ENCODE measurements at regions of chr9 and their contacts with region 1.

Region 1: DNA sequence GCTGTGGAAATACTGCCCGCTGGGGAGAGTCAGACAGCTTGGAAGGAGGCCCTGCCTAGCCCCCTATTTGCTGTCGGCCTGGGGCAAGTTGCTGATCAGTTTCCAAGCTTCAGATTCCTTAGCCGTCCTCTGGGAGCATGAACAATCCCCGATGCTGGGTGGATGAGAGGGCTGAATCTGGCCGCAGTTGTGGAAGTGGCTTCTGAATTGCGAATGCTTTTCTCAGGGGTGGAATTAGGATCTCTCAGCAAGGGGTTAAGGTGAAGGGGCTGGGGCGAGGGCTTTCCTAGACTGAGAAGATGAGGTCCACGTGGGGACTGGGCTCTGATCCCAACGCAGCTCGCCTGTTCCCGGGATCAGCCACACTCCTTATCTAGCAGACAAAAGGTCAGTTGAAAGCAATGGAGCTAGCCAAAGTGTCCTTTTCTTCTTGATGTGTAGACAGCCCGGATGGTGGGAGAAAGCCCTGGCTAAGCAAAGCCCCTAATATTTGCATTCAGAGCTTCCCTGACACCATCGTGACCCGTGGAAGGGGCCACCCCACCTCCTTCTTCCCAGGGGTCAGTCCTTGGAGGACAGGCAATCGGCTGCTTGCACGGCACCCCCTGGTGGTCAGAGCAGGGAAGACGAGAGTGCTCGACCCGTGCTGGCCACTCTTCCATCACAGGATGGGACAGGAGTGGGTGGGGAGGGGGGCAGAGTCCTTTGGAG is 54.9 kb downstream of the COL15A1 start:
- DNase-seq: peak; percentile 50
- H3K4me3 ChIP-seq: no peak overlapping the region
- H3K27ac ChIP-seq: no peak overlapping the region
- H3K4me1 ChIP-seq: no peaks in the 10 kb centered on the region
- H3K27me3 ChIP-seq: peaks cover 0 to 10% of the 10 kb centered on the region in 2 experiments
- CTCF ChIP-seq: peak; percentile 77 to 90
- POLR2A ChIP-seq: no peak

Region 2: DNA sequence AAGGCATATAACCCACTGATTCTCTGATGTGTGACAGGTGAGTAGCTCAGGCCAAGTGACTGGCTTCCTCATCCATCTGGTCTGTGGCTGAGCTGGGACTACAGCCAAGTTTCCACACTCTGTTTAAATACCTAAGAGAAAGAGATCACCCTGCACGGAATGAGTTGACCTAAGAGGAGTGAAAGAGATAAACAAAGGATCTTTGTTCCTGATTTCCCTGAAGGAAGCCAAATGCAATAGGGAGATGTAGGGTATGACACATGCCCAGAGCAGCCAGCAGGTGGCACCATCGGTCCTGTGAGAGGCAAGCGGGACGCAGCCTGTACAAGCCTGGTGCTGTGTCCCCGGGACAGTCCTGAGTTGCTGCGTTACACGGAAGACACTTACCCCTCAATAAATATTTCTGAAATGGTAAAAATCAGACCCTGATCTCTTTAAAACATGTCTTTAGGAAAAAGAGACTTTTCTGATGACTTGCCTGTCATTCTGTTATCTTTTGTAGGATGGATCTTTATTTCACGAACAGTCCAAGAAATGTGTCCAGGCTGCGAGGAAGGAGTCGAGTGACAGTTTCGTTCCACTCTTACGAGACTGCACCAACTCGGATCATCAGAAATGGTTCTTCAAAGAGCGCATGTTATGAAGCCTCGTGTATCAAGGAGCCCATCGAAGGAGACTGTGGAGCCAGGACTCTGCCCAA is 150.0 kb before region 1 on chr9:
- CTCF ChIA-PET with region 1: interaction called, 181 read pairs
- POLR2A ChIA-PET with region 1: no interaction called
- dilution Hi-C with region 1: no loop called
- intact Hi-C with region 1: loop called (anchors 1 kb)
- DNase-seq: peak; percentile 80
- H3K4me3 ChIP-seq: no peak overlapping the region
- H3K27ac ChIP-seq: no peak overlapping the region
- H3K4me1 ChIP-seq: no peaks in the 10 kb centered on the region
- H3K27me3 ChIP-seq: no peaks in the 10 kb centered on the region
- CTCF ChIP-seq: peak; percentile 93 to 94
- POLR2A ChIP-seq: no peak

Region 3: GRCh38 chr9:98974994-98975712 is 23.4 kb before region 1 on chr9:
- CTCF ChIA-PET with region 1: interaction called, 5 read pairs
- POLR2A ChIA-PET with region 1: no interaction called
- dilution Hi-C with region 1: no loop called
- intact Hi-C with region 1: loop called (anchors 1 kb)
- DNase-seq: peak; percentile 58
- H3K4me3 ChIP-seq: no peak overlapping the region
- H3K27ac ChIP-seq: no peak overlapping the region
- H3K4me1 ChIP-seq: no peaks in the 10 kb centered on the region
- H3K27me3 ChIP-seq: peaks cover 0 to 3% of the 10 kb centered on the region in 2 experiments
- CTCF ChIP-seq: peak; percentile 95 to 100
- POLR2A ChIP-seq: no peak

Region 4: GRCh38 chr9:99140685-99141314 is 142.2 kb after region 1 on chr9:
- CTCF ChIA-PET with region 1: interaction called, 33 read pairs
- POLR2A ChIA-PET with region 1: no interaction called
- dilution Hi-C with region 1: no loop called
- intact Hi-C with region 1: loop called (anchors 1 kb)
- DNase-seq: peak; percentile 30
- H3K4me3 ChIP-seq: no peak overlapping the region
- H3K27ac ChIP-seq: no peak overlapping the region
- H3K4me1 ChIP-seq: no peaks in the 10 kb centered on the region
- H3K27me3 ChIP-seq: no peaks in the 10 kb centered on the region
- CTCF ChIP-seq: peak; percentile 63 to 73
- POLR2A ChIP-seq: no peak

Region 5: DNA sequence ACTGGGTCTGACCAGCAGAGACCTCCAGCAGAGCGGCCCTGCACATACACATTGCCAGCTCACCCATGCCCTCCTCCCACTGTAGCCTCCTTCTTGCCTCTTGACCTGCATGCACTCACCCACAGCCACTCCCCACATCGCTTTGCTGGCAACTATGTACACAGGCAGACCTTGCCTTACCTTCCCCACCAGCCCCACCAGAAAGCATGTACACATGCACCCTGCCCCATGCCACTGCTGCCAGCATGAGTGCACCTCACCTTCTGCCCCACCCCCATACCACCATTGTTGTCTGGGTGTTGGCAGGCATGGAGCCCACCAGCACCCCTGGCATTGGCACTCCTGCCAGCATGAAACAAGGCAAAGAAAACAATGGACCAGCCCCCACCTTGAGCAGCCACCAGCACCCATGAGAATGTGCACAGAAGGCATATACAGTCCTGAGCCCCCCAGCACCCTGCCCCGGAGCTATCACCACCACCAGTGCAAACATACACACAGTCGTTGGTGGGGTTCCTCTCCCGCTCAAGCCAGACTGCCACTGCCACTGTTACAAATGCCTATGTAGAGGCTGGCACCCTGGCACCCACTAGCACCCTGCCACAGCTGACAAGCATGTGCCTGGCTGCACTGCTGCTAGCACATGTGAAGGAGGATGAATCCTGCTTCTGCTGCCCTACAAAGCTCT is 651.7 kb after region 1 on chr9:
- CTCF ChIA-PET with region 1: no interaction called
- POLR2A ChIA-PET with region 1: no interaction called
- dilution Hi-C with region 1: no loop called
- intact Hi-C with region 1: no loop called
- DNase-seq: no peak
- H3K4me3 ChIP-seq: no peak overlapping the region
- H3K27ac ChIP-seq: no peak overlapping the region
- H3K4me1 ChIP-seq: no peaks in the 10 kb centered on the region
- H3K27me3 ChIP-seq: no peaks in the 10 kb centered on the region
- CTCF ChIP-seq: no peak
- POLR2A ChIP-seq: no peak

Region 6: DNA sequence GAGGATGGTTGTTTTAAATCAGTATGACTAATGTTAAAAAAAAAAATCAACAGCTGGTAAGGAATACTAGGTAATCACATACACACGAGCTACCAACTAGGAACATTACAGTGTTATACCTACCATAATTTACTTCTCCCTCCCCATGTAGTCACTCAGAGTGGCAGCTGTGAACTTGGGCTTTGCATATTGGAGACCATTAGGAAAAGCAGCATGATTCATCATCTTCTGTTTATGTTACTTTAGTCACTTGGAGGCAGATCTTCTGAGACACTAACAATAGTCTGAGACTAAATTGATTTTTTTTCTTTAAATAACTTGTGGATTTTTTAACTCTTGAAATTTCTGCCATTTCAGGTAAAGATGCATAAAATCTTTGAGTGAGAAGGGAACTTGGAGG is 681.6 kb after region 1 on chr9:
- CTCF ChIA-PET with region 1: no interaction called
- POLR2A ChIA-PET with region 1: no interaction called
- dilution Hi-C with region 1: no loop called
- intact Hi-C with region 1: no loop called
- DNase-seq: peak; percentile 6
- H3K4me3 ChIP-seq: no peak overlapping the region
- H3K27ac ChIP-seq: no peak overlapping the region
- H3K4me1 ChIP-seq: no peaks in the 10 kb centered on the region
- H3K27me3 ChIP-seq: no peaks in the 10 kb centered on the region
- CTCF ChIP-seq: no peak
- POLR2A ChIP-seq: no peak